ENCODE measurements at regions of chr7 and their contacts with region 1.

Region 1: GRCh38 chr7:105678811-105679495 is 97.7 kb upstream of the EFCAB10 start:
- DNase-seq: no peak
- ATAC-seq: no peak
- H3K4me3 Mint-ChIP-seq: peak overlapping the region in 9 of 10 donors; percentile 5 to 87 (median 71)
- H3K27ac Mint-ChIP-seq: peak overlapping the region; percentile 79 to 96 (median 90)
- H3K4me1 Mint-ChIP-seq: peaks cover 36 to 69% (median 65%) of the 10 kb centered on the region in 4 donors
- H3K27me3 Mint-ChIP-seq: no peaks in the 10 kb centered on the region

Region 2: DNA sequence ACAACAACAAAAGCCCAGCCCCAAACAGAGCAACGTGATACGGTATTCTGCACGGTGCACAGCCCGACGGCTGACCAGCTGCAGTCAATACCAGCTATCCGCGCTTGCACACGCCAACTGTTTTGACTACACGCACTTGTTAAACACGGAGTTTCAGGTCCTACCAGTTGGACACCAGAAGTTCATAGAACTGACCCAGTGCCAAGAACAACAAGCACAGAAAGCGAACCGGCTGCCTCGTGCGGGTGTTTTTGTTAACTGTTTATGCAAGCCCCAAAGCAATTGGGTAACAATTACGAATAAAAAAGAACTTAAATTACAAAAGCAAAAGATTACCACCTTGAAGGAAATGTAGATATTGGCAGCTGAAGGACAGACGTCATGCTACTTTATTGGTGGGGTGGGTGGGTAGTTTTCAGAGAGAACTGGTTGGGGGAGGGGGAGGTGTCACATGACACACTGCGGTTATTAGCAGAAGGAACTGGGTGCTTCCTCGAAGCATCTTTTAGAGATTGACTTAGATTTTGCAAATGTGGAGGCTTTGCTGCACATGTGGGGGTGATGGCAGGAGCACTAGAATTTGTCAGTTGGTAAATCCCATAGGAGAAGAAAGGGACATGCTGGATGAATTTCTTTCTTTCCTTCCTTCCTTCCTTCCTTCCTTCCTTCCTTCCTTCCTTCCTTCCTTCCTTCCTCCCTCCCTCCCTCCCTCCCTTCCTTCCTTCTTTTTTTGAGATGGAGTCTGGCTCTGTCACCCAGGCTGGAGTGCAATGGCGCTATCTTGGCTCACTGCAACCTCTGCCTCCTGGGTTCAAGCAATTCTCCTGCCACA is 13.0 kb after region 1 on chr7:
- POLR2A ChIA-PET with region 1: interaction called, 13 read pairs
- DNase-seq: peak; percentile 36 to 87 (median 72)
- ATAC-seq: peak; percentile 73 to 81
- H3K4me3 Mint-ChIP-seq: peak overlapping the region; percentile 87 to 99 (median 94)
- H3K27ac Mint-ChIP-seq: peak overlapping the region; percentile 95 to 99 (median 99)
- H3K4me1 Mint-ChIP-seq: peaks cover 27 to 63% (median 59%) of the 10 kb centered on the region in 4 donors
- H3K27me3 Mint-ChIP-seq: no peaks in the 10 kb centered on the region